ENCODE measurements at regions of chr7 and their contacts with region 1.

Region 1: DNA sequence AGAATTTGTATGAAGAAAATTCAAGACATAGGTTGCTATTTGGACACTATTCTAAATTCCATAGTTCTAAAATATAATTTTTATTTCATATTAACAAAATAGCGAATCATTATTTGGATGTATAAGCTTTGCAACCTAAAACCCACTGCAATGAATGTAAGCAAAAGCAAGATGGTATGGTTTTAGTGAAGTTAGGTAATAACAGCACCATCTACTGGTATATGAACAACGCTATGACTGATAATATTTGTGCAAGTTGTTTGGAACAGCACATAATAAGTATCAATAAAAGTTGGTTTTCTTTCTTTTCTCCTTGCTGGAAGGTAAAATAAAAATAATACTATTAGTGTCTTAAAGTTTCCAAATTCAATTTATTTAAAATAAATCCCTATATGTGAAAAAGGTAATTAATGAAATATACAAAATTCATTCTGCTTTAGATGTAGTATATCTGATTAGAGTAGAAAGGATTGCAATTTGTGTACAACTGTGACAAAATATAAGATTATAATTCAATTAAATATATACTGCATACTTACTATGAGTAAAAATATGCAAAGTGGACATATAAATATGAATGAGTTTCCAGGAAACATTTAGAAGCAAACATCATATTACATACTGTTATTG is 79.0 kb upstream of the LSM8 start:
- DNase-seq: no peak
- H3K4me3 ChIP-seq: no peak overlapping the region
- H3K27ac ChIP-seq: no peak overlapping the region
- H3K27me3 ChIP-seq: no peaks in the 10 kb centered on the region
- CTCF ChIP-seq: peak in 55 of 56 donors; percentile 44 to 83 (median 70)

Region 2: DNA sequence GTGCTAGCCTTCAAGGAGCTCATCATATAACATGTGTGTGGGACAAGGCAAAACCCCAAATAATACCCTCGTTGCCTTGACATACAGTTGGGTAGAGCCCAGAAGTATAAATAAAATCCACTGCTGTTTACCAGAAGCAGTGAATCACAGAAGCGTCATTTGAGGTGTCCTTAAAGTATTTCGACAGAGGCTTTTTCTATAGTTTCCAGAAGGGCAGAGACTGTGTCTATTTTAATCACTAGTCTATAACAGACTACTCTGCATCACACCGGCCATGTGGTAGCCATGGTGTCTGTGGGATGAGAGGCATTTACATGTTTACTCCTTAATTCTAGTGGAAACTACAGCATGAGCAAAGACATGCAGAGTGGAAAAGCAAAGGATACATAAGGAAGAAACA is 363.0 kb before region 1 on chr7:
- intact Hi-C with region 1: loop called in 1 of 2 experiments (anchors 10 kb)
- DNase-seq: no peak
- H3K4me3 ChIP-seq: no peak overlapping the region
- H3K27ac ChIP-seq: peak overlapping the region in 17 of 59 donors; percentile 2 to 79 (median 27)
- H3K27me3 ChIP-seq: no peaks in the 10 kb centered on the region
- CTCF ChIP-seq: no peak

Region 3: GRCh38 chr7:117750612-117751563 is 354.0 kb before region 1 on chr7:
- intact Hi-C with region 1: loop called (anchors 10 kb)
- DNase-seq: no peak
- H3K4me3 ChIP-seq: peak overlapping the region in 4 of 59 donors; percentile 16 to 45 (median 18)
- H3K27ac ChIP-seq: peak overlapping the region; percentile 18 to 96 (median 84)
- H3K27me3 ChIP-seq: no peaks in the 10 kb centered on the region
- CTCF ChIP-seq: peak; percentile 50 to 90 (median 73)

Region 4: GRCh38 chr7:117901089-117901797 is 203.7 kb before region 1 on chr7:
- intact Hi-C with region 1: no loop called
- DNase-seq: no peak
- H3K4me3 ChIP-seq: no peak overlapping the region
- H3K27ac ChIP-seq: no peak overlapping the region
- H3K27me3 ChIP-seq: no peaks in the 10 kb centered on the region
- CTCF ChIP-seq: no peak

Measured in dorsolateral prefrontal cortex (tissue), 120 donors.